Testis (tissue), 5 donors: ENCODE measurements at regions of chr2 and their contacts with region 1.

Region 1: GRCh38 chr2:127479219-127479825 is 47.0 kb downstream of the IWS1 start:
- DNase-seq: no peak
- H3K4me3 ChIP-seq: no peak overlapping the region
- H3K27ac ChIP-seq: no peak overlapping the region
- H3K4me1 ChIP-seq: no peaks in the 10 kb centered on the region
- H3K27me3 ChIP-seq: no peaks in the 10 kb centered on the region
- CTCF ChIP-seq: peak; percentile 26 to 45 (median 45)
- POLR2A ChIP-seq: no peak

Region 2: GRCh38 chr2:127330753-127331152 is 148.6 kb before region 1 on chr2:
- intact Hi-C with region 1: loop called (anchors 10 kb)
- DNase-seq: no peak
- H3K4me3 ChIP-seq: no peak overlapping the region
- H3K27ac ChIP-seq: no peak overlapping the region
- H3K4me1 ChIP-seq: no peaks in the 10 kb centered on the region
- H3K27me3 ChIP-seq: no peaks in the 10 kb centered on the region
- CTCF ChIP-seq: no peak
- POLR2A ChIP-seq: no peak